ENCODE measurements at regions of chr3 and their contacts with region 1.

Region 1: DNA sequence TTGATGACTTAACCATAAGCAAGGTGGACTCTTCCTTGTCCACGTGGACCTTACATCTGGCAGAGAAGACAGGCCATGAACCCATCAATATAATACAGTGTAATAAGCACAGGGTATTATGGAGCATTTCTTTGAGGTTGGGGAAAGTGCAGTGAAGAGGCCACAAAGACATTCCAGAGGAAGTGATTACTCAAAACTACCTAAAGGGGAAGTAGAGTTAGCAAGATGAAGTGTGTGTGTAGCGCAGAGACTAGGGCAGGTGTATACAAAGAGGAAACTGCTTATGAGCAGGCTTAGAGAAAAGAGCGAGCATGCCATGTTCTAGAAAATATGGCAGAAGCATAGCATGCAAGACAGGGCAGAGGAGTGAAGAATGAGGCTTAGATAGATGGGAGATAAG is 17.9 kb downstream of the CP start:
- DNase-seq: no peak
- ATAC-seq: no peak
- H3K4me3 ChIP-seq: no peak overlapping the region
- H3K27ac ChIP-seq: no peak overlapping the region
- H3K4me1 ChIP-seq: peaks cover 48% of the 10 kb centered on the region
- H3K27me3 ChIP-seq: no peaks in the 10 kb centered on the region
- CTCF ChIP-seq: no peak
- EP300 ChIP-seq: no peak
- POLR2A ChIP-seq: no peak
- RAD21 ChIP-seq: no peak

Region 2: GRCh38 chr3:149038322-149038721 is 165.4 kb before region 1 on chr3:
- CTCF ChIA-PET with region 1: no interaction called
- POLR2A ChIA-PET with region 1: no interaction called
- in situ Hi-C with region 1: no loop called
- intact Hi-C with region 1: no loop called
- DNase-seq: no peak
- ATAC-seq: peak; percentile 50
- H3K4me3 ChIP-seq: no peak overlapping the region
- H3K27ac ChIP-seq: peak overlapping the region; percentile 83
- H3K4me1 ChIP-seq: peaks cover 40% of the 10 kb centered on the region
- H3K27me3 ChIP-seq: no peaks in the 10 kb centered on the region
- CTCF ChIP-seq: no peak
- EP300 ChIP-seq: no peak
- POLR2A ChIP-seq: no peak
- RAD21 ChIP-seq: no peak

Region 3: DNA sequence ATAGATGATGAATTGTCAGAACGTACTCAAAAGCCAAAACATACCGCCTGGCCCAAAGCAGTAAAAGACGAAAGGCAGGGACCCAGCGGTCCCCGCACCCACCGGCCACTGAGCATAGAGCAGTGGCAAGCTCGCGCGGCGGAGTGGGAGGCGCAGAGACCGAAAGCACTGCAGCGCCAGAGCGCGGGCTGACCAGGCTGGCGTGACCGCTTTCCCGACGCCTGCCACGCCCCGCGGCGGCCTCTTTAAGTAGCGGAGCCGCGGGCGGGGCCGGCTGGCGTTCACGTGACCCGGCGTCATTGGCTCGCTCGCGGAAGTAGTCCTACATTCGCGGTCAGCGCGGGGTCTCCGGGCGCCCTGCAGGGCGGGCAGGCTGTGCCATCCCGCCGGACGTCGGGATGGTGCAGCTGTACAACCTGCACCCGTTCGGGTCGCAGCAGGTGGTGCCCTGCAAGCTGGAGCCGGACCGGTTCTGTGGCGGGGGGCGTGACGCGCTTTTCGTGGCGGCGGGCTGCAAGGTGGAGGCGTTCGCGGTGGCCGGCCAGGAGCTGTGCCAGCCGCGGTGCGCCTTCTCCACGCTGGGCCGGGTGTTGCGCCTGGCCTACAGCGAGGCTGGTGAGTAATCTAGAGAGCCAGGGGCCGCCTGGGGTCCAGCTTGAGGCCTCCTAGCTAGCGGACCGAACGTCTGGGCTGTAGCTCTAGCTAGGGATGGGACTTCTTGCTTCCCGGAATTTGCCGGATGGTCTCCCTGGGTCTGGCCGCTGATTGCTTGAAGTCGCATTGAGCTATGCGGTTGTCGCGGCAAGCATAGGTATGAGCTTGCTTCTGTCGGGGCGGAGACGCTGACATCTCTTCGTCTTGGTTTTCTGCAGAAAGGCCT is 74.2 kb before region 1 on chr3 and contains the start of gene HPS3:
- CTCF ChIA-PET with region 1: no interaction called
- POLR2A ChIA-PET with region 1: interaction called, 4 read pairs
- in situ Hi-C with region 1: no loop called
- intact Hi-C with region 1: loop called (anchors 5 kb)
- DNase-seq: peak; percentile 79
- ATAC-seq: peak; percentile 96
- H3K4me3 ChIP-seq: peak within 1 kb of the TSS; percentile 78 to 95 (median 92)
- H3K27ac ChIP-seq: peak within 1 kb of the TSS; percentile 74
- H3K4me1 ChIP-seq: peaks cover 47% of the 10 kb centered on the region
- H3K27me3 ChIP-seq: no peaks in the 10 kb centered on the region; a peak in 1 of 5 replicates
- CTCF ChIP-seq: peak; percentile 16; the same call in 1 of the 2 replicates
- EP300 ChIP-seq: 0 out of 4 replicates have a peak, but pooled peaks of 1 of the 2 experiments have one; percentile 6
- POLR2A ChIP-seq: peak; percentile 90 to 92
- RAD21 ChIP-seq: peak; percentile 38; the same call in 1 of the 2 replicates
- total RNA-seq, gene HPS3: 18.9 and 23.6 TPM in 2 replicates

Region 4: DNA sequence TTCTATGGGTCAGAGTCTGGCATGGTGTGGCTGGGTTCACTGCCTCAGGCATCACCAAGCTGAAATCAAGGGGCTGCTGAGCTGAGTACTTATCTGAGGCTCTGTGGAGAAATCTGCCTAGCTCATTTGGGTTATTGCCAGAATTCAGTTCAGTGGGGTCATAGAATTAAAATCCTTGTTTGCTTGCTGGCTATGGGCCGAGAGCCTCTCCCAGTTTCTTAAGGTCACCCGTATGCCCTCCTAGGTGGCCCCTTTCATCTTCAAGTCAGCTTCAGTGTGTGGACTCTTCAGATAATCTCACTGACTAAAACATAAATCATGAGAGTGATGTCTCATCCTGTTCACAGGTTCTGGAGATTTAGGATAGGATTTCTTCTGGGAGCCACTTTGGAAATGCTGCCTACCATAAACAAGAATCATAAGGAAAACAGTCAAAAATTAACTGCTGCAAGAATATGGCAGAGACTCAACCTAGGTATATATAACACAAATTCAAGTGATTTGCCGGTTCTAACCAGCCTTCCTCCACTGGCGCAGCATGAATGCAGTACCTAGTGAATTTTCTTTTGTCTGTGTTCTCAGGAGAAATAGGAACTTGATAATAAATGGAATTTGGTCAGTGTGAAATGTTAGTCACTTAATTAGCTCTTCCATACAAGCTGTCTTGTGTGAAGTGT is 12.6 kb after region 1 on chr3:
- CTCF ChIA-PET with region 1: no interaction called
- POLR2A ChIA-PET with region 1: no interaction called
- in situ Hi-C with region 1: no loop called
- intact Hi-C with region 1: loop called (anchors 1 kb)
- DNase-seq: peak; percentile 37
- ATAC-seq: peak; percentile 34
- H3K4me3 ChIP-seq: peak overlapping the region; percentile 52 to 78 (median 70)
- H3K27ac ChIP-seq: peak overlapping the region; percentile 99
- H3K4me1 ChIP-seq: peaks cover 65% of the 10 kb centered on the region
- H3K27me3 ChIP-seq: no peaks in the 10 kb centered on the region; a peak in 1 of 5 replicates
- CTCF ChIP-seq: no peak
- EP300 ChIP-seq: peak in 1 of 2 experiments; percentile 37; a peak in 1 of 4 replicates
- POLR2A ChIP-seq: no peak
- RAD21 ChIP-seq: no peak

Region 5: GRCh38 chr3:149273096-149273751 is 69.5 kb after region 1 on chr3:
- CTCF ChIA-PET with region 1: interaction called, 4 read pairs
- POLR2A ChIA-PET with region 1: no interaction called
- in situ Hi-C with region 1: no loop called
- intact Hi-C with region 1: loop called (anchors 2 kb)
- DNase-seq: peak; percentile 81
- ATAC-seq: peak; percentile 81
- H3K4me3 ChIP-seq: no peak overlapping the region
- H3K27ac ChIP-seq: no peak overlapping the region
- H3K4me1 ChIP-seq: peaks cover 44% of the 10 kb centered on the region
- H3K27me3 ChIP-seq: no peaks in the 10 kb centered on the region
- CTCF ChIP-seq: peak; percentile 96
- EP300 ChIP-seq: no peak
- POLR2A ChIP-seq: no peak
- RAD21 ChIP-seq: peak; percentile 96

Measured in HepG2 (cell line).